ENCODE measurements at regions of chr1 and their contacts with region 1.

Region 1: DNA sequence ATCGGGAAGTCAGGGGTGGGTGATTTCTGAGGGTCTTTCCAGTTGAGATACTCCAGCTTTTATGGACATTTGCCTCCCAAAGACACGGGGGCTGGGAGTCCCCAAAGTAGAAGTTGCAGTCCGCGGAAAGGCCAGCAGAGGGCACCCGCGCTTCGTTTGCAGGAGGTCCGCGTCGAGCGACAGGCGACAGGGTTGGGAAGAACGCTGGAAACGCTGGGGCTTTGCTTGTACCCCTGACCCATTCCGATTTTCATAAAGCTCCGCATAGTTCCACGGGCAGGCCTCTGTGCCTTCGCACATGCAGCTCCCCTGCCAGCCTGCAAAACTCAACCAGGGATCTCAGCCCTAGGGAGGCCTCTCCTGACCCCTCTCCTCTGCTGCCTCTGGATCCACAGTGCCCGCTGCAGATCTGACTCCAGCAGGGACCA is 44.2 kb upstream of the LAPTM5 start:
- DNase-seq: peak; percentile 90
- H3K4me3 ChIP-seq: peak overlapping the region in 2 of 4 donors; percentile 9 to 23
- H3K27ac ChIP-seq: peak overlapping the region in 3 of 4 donors; percentile 63 to 97 (median 68)
- H3K4me1 ChIP-seq: peaks cover 0 to 37% (median 23%) of the 10 kb centered on the region in 4 donors
- H3K27me3 ChIP-seq: no peaks in the 10 kb centered on the region
- CTCF ChIP-seq: peak; percentile 89 to 96 (median 95)
- EP300 ChIP-seq: no peak
- POLR2A ChIP-seq: no peak

Region 2: GRCh38 chr1:30856260-30856790 is 54.5 kb after region 1 on chr1:
- intact Hi-C with region 1: loop called (anchors 5 kb)
- DNase-seq: no peak
- H3K4me3 ChIP-seq: no peak overlapping the region
- H3K27ac ChIP-seq: peak overlapping the region in 3 of 4 donors; percentile 58 to 71 (median 70)
- H3K4me1 ChIP-seq: peaks cover 0 to 44% (median 33%) of the 10 kb centered on the region in 4 donors
- H3K27me3 ChIP-seq: no peaks in the 10 kb centered on the region
- CTCF ChIP-seq: peak in 2 of 4 experiments; percentile 5 to 41
- EP300 ChIP-seq: no peak
- POLR2A ChIP-seq: no peak